ENCODE measurements at regions of chr1 and their contacts with region 1.

Region 1: GRCh38 chr1:92317836-92318493 is 19.1 kb downstream of the RPAP2 start:
- DNase-seq: peak in 1 of 2 donors; percentile 67
- ATAC-seq: peak; percentile 34 to 38 (median 35)
- H3K4me3 ChIP-seq: no peak overlapping the region
- H3K4me3 Mint-ChIP-seq: peak overlapping the region; percentile 65
- H3K27ac ChIP-seq: peak overlapping the region; percentile 91
- H3K27ac Mint-ChIP-seq: peak overlapping the region; percentile 82 to 98
- H3K4me1 ChIP-seq: peaks cover 24% of the 10 kb centered on the region
- H3K4me1 Mint-ChIP-seq: peaks cover 50% of the 10 kb centered on the region in 2 donors
- H3K27me3 ChIP-seq: no peaks in the 10 kb centered on the region
- H3K27me3 Mint-ChIP-seq: no peaks in the 10 kb centered on the region
- CTCF ChIP-seq: no peak

Region 2: GRCh38 chr1:91555821-91556531 is 762.0 kb before region 1 on chr1:
- intact Hi-C with region 1: loop called (anchors 5 kb)
- DNase-seq: peak; percentile 57 to 93
- ATAC-seq: peak; percentile 81 to 94 (median 87)
- H3K4me3 ChIP-seq: no peak overlapping the region
- H3K4me3 Mint-ChIP-seq: peak overlapping the region; percentile 81
- H3K27ac ChIP-seq: peak overlapping the region; percentile 90
- H3K27ac Mint-ChIP-seq: peak overlapping the region; percentile 83 to 99
- H3K4me1 ChIP-seq: peaks cover 73% of the 10 kb centered on the region
- H3K4me1 Mint-ChIP-seq: peaks cover 94 to 97% of the 10 kb centered on the region in 2 donors
- H3K27me3 ChIP-seq: no peaks in the 10 kb centered on the region
- H3K27me3 Mint-ChIP-seq: no peaks in the 10 kb centered on the region
- CTCF ChIP-seq: no peak

Region 3: GRCh38 chr1:92298573-92299476 is 19.1 kb before region 1 on chr1 and contains the starts of genes GLMN and RPAP2:
- intact Hi-C with region 1: loop called (anchors 2 kb)
- DNase-seq: peak; percentile 77 to 88
- ATAC-seq: peak; percentile 94 to 98 (median 96)
- H3K4me3 ChIP-seq: peak within 1 kb of the TSS; percentile 83
- H3K4me3 Mint-ChIP-seq: peak within 1 kb of the TSS; percentile 96
- H3K27ac ChIP-seq: peak within 1 kb of the TSS; percentile 91
- H3K27ac Mint-ChIP-seq: peak within 1 kb of the TSS; percentile 95 to 99
- H3K4me1 ChIP-seq: peaks cover 9% of the 10 kb centered on the region
- H3K4me1 Mint-ChIP-seq: peaks cover 31 to 37% of the 10 kb centered on the region in 2 donors
- H3K27me3 ChIP-seq: no peaks in the 10 kb centered on the region
- H3K27me3 Mint-ChIP-seq: no peaks in the 10 kb centered on the region
- CTCF ChIP-seq: no peak
- total RNA-seq, gene GLMN: 19.8 to 25.9 (median 19.9) TPM
- total RNA-seq, gene RPAP2: 39.4 to 45.7 (median 39.8) TPM

Region 4: DNA sequence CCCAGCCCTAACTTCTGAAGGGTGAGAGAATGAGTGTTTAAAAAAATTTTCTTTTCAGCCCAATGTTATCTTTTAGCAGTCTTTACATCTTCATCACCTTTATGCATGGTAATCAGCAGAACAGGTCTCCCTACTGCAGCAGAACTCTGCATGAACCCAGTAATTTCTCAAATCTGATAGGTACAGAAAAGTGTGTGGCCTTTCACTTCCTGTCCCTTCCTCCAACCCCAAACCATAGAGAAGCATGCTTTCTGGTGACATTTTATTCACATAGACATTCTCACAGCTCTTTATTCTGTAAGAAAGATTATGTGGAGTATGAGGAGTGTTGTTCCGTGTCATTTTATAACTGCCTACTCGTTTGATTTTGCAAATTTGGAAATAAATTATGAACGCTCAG is 49.5 kb after region 1 on chr1:
- intact Hi-C with region 1: loop called (anchors 5 kb)
- DNase-seq: peak in 1 of 2 donors; percentile 21
- ATAC-seq: peak; percentile 44 to 52 (median 48)
- H3K4me3 ChIP-seq: no peak overlapping the region
- H3K4me3 Mint-ChIP-seq: peak overlapping the region; percentile 21
- H3K27ac ChIP-seq: no peak overlapping the region
- H3K27ac Mint-ChIP-seq: peak overlapping the region; percentile 46 to 74
- H3K4me1 ChIP-seq: peaks cover 11% of the 10 kb centered on the region
- H3K4me1 Mint-ChIP-seq: peaks cover 40 to 41% of the 10 kb centered on the region in 2 donors
- H3K27me3 ChIP-seq: no peaks in the 10 kb centered on the region
- H3K27me3 Mint-ChIP-seq: no peaks in the 10 kb centered on the region
- CTCF ChIP-seq: no peak

Region 5: DNA sequence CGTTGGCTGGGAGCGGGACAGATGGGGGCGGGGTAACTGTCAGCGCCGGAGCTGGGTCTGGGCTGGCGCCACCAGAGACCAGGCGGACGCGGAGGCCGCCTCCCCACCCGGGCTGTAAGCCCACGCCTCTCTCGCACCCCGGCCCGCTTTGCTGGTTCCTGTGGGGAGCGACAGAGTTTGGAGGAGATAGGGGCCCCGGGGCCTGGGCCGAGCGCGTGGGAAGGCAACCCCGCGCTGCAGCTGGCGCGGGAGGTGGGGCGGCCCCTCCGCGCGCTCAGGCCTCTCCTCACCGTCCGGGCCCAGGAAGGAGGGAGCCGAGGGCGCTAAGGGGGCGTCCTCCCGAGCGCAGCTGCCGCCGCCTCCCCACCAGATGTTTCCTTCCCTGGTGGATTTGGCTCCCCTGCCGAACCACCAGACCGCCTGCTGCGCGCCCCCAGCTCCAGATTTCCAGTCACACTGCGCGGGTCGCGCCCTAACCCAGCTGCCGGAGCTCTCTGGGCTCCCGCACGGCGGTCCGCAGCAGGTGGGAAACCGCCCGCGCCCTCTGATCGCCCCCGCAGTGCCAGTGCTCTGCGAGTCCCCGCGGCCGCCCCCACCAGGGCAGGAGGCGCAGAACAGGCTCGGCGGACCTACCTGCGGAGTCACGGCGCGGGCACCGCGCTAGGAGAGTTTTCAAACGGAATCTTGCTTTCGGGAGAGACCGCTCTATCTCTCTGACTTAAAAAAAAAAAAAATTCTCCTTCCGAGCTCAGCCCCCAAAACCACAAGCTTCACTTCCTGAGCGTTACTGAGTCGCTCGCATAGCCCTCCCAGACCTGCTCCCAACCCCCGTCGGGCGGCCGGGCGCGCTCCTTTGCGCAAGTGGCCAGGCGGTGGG is 167.7 kb after region 1 on chr1:
- intact Hi-C with region 1: loop called (anchors 2 kb)
- DNase-seq: peak; percentile 73 to 88
- ATAC-seq: peak; percentile 52 to 73 (median 70)
- H3K4me3 ChIP-seq: peak overlapping the region; percentile 65
- H3K4me3 Mint-ChIP-seq: peak overlapping the region; percentile 98
- H3K27ac ChIP-seq: peak overlapping the region; percentile 71
- H3K27ac Mint-ChIP-seq: peak overlapping the region; percentile 88 to 94
- H3K4me1 ChIP-seq: peaks cover 39% of the 10 kb centered on the region
- H3K4me1 Mint-ChIP-seq: peaks cover 26 to 47% of the 10 kb centered on the region in 2 donors
- H3K27me3 ChIP-seq: no peaks in the 10 kb centered on the region
- H3K27me3 Mint-ChIP-seq: no peaks in the 10 kb centered on the region
- CTCF ChIP-seq: peak; percentile 60

Region 6: DNA sequence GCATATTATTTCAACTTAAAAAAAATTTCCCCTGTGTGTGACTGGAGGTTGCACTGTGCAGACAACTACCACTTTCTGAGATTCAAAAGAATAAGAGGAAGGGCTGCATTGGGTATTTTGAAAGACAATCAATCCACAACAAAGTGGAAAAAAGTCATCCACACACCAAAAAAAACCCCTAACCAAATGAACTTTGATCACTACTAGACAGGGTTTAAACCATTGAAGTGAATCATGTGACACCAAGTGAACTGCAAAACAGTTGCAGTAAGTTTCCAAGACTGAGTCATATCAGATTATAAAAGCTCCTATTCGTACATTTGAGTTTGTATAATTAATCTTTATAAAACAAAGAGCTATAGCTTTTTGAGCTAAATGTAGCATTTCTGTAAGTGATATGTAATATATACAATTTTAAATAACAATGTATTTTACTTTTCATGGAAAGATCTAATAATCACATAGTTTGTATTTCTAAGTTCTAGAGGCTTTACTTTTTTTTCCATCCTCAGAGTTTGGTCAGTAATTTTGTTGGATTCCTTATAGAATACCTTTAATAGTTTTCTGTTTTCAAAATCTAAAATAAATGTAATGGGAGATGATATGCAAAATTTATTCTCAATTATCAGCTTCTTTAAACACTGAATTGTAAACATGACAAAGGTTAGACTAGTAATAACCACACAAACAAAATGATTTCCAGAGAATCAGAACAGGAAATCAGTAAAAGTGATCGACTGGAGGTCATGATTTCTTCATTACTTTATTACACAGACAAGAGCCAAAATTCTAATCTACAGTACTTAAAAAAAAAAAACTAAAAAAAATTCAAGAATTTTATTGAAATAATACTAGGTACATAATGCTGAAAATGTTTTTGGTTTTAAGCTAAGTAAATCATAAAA is 219.3 kb after region 1 on chr1:
- intact Hi-C with region 1: loop called (anchors 2 kb)
- DNase-seq: peak in 1 of 2 donors; percentile 83
- ATAC-seq: peak; percentile 57 to 66 (median 63)
- H3K4me3 ChIP-seq: peak overlapping the region; percentile 19
- H3K4me3 Mint-ChIP-seq: peak overlapping the region; percentile 68
- H3K27ac ChIP-seq: peak overlapping the region; percentile 87
- H3K27ac Mint-ChIP-seq: peak overlapping the region; percentile 91 to 92
- H3K4me1 ChIP-seq: peaks cover 11% of the 10 kb centered on the region
- H3K4me1 Mint-ChIP-seq: peaks cover 24 to 26% of the 10 kb centered on the region in 2 donors
- H3K27me3 ChIP-seq: no peaks in the 10 kb centered on the region
- H3K27me3 Mint-ChIP-seq: no peaks in the 10 kb centered on the region
- CTCF ChIP-seq: no peak

Region 7: GRCh38 chr1:92583821-92584760 is 266.1 kb after region 1 on chr1:
- intact Hi-C with region 1: loop called (anchors 1 kb)
- DNase-seq: peak in 1 of 2 donors; percentile 70
- ATAC-seq: peak; percentile 85 to 96 (median 89)
- H3K4me3 ChIP-seq: peak overlapping the region; percentile 10
- H3K4me3 Mint-ChIP-seq: peak overlapping the region; percentile 76
- H3K27ac ChIP-seq: peak overlapping the region; percentile 64
- H3K27ac Mint-ChIP-seq: peak overlapping the region; percentile 86 to 88
- H3K4me1 ChIP-seq: peaks cover 12% of the 10 kb centered on the region
- H3K4me1 Mint-ChIP-seq: peaks cover 20% of the 10 kb centered on the region in 2 donors
- H3K27me3 ChIP-seq: no peaks in the 10 kb centered on the region
- H3K27me3 Mint-ChIP-seq: no peaks in the 10 kb centered on the region
- CTCF ChIP-seq: no peak